ENCODE measurements at regions of chr16 and their contacts with region 1.

Region 1: DNA sequence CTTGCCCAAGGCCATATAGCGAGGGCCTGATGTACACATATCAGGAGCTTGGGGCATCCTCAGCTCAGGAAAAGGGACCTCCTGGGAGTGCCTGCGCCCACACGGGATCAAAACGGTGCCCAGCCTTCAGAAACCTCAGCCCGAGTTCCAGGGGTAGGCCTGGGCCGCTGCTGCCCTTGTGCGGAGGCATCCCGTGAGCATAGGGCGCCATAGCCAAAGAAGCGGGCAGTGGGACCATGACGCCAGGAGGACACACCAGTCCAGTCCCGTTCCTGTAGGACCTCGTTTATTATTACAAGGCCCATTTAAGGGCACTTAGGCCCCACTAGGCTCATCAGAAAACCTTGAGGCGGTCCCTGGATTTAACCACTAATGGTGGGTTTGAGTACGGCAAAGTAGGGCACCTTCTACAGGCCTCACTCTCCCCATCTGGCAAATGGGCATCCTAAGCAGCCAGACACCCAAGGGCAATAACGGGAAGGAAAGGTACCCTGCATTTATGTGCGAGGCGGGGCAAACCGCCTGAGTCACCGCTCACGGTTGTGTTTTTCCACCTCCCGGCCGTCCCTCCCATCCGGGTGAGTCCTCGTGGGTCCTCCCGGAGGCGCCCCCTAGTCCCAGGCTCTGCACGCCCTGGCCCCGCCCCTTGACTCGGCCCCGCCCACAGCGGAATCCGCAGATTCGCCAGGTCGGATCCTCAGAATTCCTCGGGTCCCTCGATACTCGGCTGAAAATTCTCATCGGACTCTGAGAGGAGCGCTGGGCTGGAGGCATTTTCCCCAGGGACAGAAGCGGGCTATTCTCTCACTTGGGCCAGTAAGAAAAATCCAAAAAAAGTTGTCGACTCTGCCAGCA is 726 bp upstream of the SETD1A start:
- DNase-seq: peak; percentile 79 to 91
- ATAC-seq: peak; percentile 65 to 80
- H3K4me3 ChIP-seq: peak overlapping the region; percentile 77
- H3K27ac ChIP-seq: peak overlapping the region; percentile 98 to 100
- H3K4me1 ChIP-seq: peaks cover 22% of the 10 kb centered on the region
- CTCF ChIP-seq: 0 out of 3 replicates have a peak, but pooled peaks have one; percentile 25
- EP300 ChIP-seq: no peak
- POLR2A ChIP-seq: no peak; the same call in none of the 2 replicates
- RAD21 ChIP-seq: no peak

Region 2: GRCh38 chr16:30941600-30942425 is 15.0 kb before region 1 on chr16:
- CTCF ChIA-PET with region 1: interaction called, 78 read pairs
- POLR2A ChIA-PET with region 1: interaction called, 4 read pairs
- DNase-seq: peak; percentile 77 to 87
- ATAC-seq: peak; percentile 89 to 96
- H3K4me3 ChIP-seq: no peak overlapping the region
- H3K27ac ChIP-seq: peak overlapping the region; percentile 39 to 73; a peak in 4 of 6 replicates
- H3K4me1 ChIP-seq: peaks cover 19% of the 10 kb centered on the region
- CTCF ChIP-seq: peak; percentile 75
- EP300 ChIP-seq: no peak
- POLR2A ChIP-seq: no peak
- RAD21 ChIP-seq: peak; percentile 77 to 80

Region 3: GRCh38 chr16:31868691-31869167 is 911.9 kb after region 1 on chr16:
- CTCF ChIA-PET with region 1: interaction called, 15 read pairs
- POLR2A ChIA-PET with region 1: interaction called, 3 read pairs
- DNase-seq: peak; percentile 51 to 66
- ATAC-seq: peak; percentile 86 to 89
- H3K4me3 ChIP-seq: no peak overlapping the region
- H3K27ac ChIP-seq: no peak overlapping the region
- H3K4me1 ChIP-seq: no peaks in the 10 kb centered on the region
- CTCF ChIP-seq: peak; percentile 82
- EP300 ChIP-seq: no peak
- POLR2A ChIP-seq: no peak
- RAD21 ChIP-seq: peak; percentile 85 to 86